A549 (cell line): ENCODE measurements at regions of chr1 and their contacts with region 1.

Region 1: GRCh38 chr1:145978854-145979759 is 14.6 kb downstream of the POLR3GL start:
- DNase-seq: peak in 1 of 2 experiments; percentile 82
- ATAC-seq: peak; percentile 58 to 75; a peak in 5 of 6 replicates
- H3K4me3 ChIP-seq: no peak overlapping the region
- H3K27ac ChIP-seq: peak overlapping the region; percentile 25 to 33; a peak in 4 of 6 replicates
- H3K4me1 ChIP-seq: peaks cover 10% of the 10 kb centered on the region; the same call in 2 of the 3 replicates
- CTCF ChIP-seq: no peak
- EP300 ChIP-seq: no peak
- POLR2A ChIP-seq: no peak
- RAD21 ChIP-seq: no peak

Region 2: DNA sequence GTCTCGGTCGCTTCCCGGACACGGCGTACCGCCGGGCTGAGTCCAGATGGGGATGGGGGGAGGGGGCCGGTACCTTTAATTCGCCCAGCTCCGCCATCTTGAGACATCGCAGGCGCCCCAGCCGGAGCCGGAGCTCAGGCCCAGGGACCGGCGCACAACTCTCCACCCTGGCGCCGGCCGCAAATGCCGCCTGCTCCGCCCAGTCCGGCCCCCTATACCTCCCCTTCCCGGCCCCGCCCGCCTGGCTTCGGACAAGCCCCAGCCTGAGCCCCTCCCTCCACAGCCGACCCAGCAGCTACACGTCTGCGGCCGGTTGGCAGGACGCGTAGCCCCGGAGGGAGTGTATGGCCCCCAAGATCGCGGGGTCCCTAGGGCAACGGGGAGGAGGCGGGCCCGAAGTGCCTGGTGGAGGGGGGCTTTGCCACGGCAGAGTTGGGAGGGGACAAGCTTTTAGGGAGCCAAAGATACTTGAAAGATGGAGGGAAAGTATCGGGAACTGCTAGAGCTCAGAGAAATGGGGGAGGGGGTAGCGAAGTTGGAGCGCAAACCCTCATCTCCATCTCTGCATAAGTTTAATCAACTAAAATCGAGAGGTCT is 120.1 kb before region 1 on chr1 and contains the start of gene PIAS3:
- CTCF ChIA-PET with region 1: interaction called, 23 read pairs
- POLR2A ChIA-PET with region 1: no interaction called
- DNase-seq: peak; percentile 92 to 93
- ATAC-seq: peak; percentile 83 to 95
- H3K4me3 ChIP-seq: peak within 1 kb of the TSS; percentile 53
- H3K27ac ChIP-seq: peak within 1 kb of the TSS; percentile 92 to 99
- H3K4me1 ChIP-seq: peaks cover 10% of the 10 kb centered on the region; the same call in 2 of the 3 replicates
- CTCF ChIP-seq: no peak
- EP300 ChIP-seq: peak in 1 of 2 experiments; percentile 7; a peak in 1 of 5 replicates
- POLR2A ChIP-seq: peak; percentile 43
- RAD21 ChIP-seq: no peak
- polyA plus RNA-seq, gene PIAS3: 15.5 and 25.4 TPM in 2 replicates

Region 3: GRCh38 chr1:145936247-145936646 is 42.9 kb before region 1 on chr1:
- CTCF ChIA-PET with region 1: interaction called, 11 read pairs
- POLR2A ChIA-PET with region 1: no interaction called
- DNase-seq: no peak
- ATAC-seq: no peak
- H3K4me3 ChIP-seq: no peak overlapping the region
- H3K27ac ChIP-seq: no peak overlapping the region; a peak in 1 of 6 replicates
- H3K4me1 ChIP-seq: no peaks in the 10 kb centered on the region
- CTCF ChIP-seq: no peak
- EP300 ChIP-seq: no peak
- POLR2A ChIP-seq: no peak
- RAD21 ChIP-seq: no peak

Region 4: DNA sequence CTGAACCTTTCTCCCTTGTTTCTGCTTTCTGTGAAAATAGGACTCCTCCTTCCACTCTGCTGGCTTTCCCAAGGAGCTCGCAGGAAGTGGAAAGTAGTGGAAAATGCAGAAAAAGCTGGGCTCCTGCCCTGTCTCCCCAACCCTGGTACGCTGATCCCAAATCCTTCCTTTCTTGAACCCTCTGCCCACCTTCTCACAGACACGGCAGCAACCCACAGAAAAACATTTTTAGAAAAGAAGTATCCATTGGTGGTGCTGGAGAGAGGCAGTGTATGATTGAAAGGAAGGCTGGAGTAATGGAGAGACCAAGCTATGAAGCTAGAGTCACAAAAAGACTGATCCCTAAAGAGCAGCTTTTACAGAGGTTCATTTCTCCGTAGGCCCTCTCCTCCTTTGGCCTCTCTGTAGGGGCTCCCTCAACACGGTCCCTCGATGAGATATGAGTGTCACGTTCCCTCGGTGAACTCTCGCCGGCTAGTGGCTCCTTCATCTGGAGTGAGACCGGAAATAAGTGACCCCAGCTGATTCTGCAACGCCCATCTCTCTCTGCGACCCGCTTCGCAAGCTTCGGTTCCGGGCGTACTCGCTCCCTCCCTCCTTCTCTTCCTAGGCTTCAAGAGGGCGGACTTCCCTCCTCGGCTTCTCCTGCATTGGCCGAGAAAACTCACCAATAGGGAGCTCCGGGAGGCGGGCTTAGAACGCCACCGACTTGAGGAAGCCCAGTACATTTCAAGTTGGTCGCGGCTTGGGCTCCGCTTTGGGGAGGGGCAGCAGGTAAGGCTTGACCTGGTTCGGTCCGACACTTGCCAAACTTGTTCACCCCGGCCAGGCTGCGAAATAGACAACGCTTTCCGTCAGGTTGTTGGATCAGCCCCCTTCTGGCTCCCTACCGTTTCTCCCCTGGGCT is 14.9 kb before region 1 on chr1 and contains the starts of genes ANKRD34A and POLR3GL:
- CTCF ChIA-PET with region 1: interaction called, 110 read pairs
- POLR2A ChIA-PET with region 1: interaction called, 4 read pairs
- DNase-seq: peak; percentile 93 to 95
- ATAC-seq: peak; percentile 84 to 92
- H3K4me3 ChIP-seq: peak within 1 kb of the TSS; percentile 55
- H3K27ac ChIP-seq: peak within 1 kb of the TSS; percentile 78 to 87
- H3K4me1 ChIP-seq: peaks cover 39% of the 10 kb centered on the region
- CTCF ChIP-seq: no peak
- EP300 ChIP-seq: no peak
- POLR2A ChIP-seq: peak; percentile 79
- RAD21 ChIP-seq: no peak
- polyA plus RNA-seq, gene ANKRD34A: 0.30 and 0.34 TPM in 2 replicates
- polyA plus RNA-seq, gene POLR3GL: 11.0 and 15.7 TPM in 2 replicates

Region 5: GRCh38 chr1:146012737-146013403 is 33.8 kb after region 1 on chr1:
- CTCF ChIA-PET with region 1: interaction called, 566 read pairs
- POLR2A ChIA-PET with region 1: no interaction called
- DNase-seq: peak; percentile 69 to 82
- ATAC-seq: peak; percentile 70 to 83; a peak in 5 of 6 replicates
- H3K4me3 ChIP-seq: no peak overlapping the region
- H3K27ac ChIP-seq: no peak overlapping the region
- H3K4me1 ChIP-seq: peaks cover 3% of the 10 kb centered on the region; the same call in 1 of the 3 replicates
- CTCF ChIP-seq: peak; percentile 96
- EP300 ChIP-seq: no peak
- POLR2A ChIP-seq: no peak
- RAD21 ChIP-seq: peak; percentile 93 to 96